ENCODE measurements at regions of chr10 and their contacts with region 1.

Region 1: GRCh38 chr10:13219685-13220670 is 14.2 kb downstream of the UCMA start:
- DNase-seq: peak; percentile 57
- H3K4me3 ChIP-seq: peak overlapping the region in 1 of 3 experiments; percentile 20
- H3K27ac ChIP-seq: no peak overlapping the region
- H3K4me1 ChIP-seq: peaks cover 8% of the 10 kb centered on the region
- H3K27me3 ChIP-seq: no peaks in the 10 kb centered on the region
- CTCF ChIP-seq: peak; percentile 41 to 53

Region 2: GRCh38 chr10:13276749-13277365 is 56.9 kb after region 1 on chr10:
- CTCF ChIA-PET with region 1: no interaction called
- dilution Hi-C with region 1: loop called (anchors 5 kb)
- in situ Hi-C with region 1: no loop called
- intact Hi-C with region 1: no loop called
- DNase-seq: no peak
- H3K4me3 ChIP-seq: no peak overlapping the region
- H3K27ac ChIP-seq: no peak overlapping the region
- H3K4me1 ChIP-seq: no peaks in the 10 kb centered on the region
- H3K27me3 ChIP-seq: no peaks in the 10 kb centered on the region
- CTCF ChIP-seq: peak in 1 of 2 donors; percentile 8

Region 3: GRCh38 chr10:13311177-13311575 is 91.2 kb after region 1 on chr10:
- CTCF ChIA-PET with region 1: no interaction called
- dilution Hi-C with region 1: loop called (anchors 5 kb)
- in situ Hi-C with region 1: no loop called
- intact Hi-C with region 1: no loop called
- DNase-seq: no peak
- H3K4me3 ChIP-seq: no peak overlapping the region
- H3K27ac ChIP-seq: no peak overlapping the region
- H3K4me1 ChIP-seq: no peaks in the 10 kb centered on the region
- H3K27me3 ChIP-seq: no peaks in the 10 kb centered on the region
- CTCF ChIP-seq: no peak

Region 4: DNA sequence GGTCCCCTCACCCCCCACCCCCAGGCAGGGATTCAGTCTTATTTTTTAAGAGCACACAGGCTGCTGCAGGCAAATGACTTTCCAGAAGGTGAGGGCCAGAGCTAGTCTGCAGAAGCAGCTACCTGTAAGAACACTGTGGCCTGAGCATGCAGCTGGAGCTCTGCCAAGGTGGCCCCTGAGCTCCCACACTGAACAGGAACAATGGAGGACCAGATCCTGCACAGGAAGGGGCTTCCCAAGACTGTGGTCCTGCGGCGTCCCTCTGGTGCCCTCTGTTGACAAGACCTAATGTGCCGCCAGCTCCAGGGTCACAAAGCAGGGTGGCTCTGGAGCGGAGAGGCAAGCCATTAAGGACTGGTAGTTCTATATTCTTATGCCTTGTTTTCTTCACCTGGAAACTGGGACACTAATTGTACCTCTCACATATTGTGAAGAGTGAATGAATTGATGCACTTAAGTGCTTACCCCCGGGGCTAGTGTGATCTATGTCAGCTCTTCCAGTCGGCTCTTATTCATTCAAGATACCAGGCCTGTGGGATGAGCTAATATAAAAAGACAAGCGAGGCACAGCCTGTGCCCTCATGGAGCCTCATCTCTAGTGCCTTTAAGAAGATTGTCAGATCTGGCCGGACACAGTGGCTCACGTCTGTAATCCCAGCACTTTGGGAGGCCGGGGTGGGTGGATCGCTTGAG is 316.8 kb after region 1 on chr10:
- CTCF ChIA-PET with region 1: no interaction called
- dilution Hi-C with region 1: no loop called
- in situ Hi-C with region 1: no loop called
- intact Hi-C with region 1: loop called (anchors 5 kb)
- DNase-seq: peak; percentile 14
- H3K4me3 ChIP-seq: no peak overlapping the region
- H3K27ac ChIP-seq: no peak overlapping the region
- H3K4me1 ChIP-seq: no peaks in the 10 kb centered on the region
- H3K27me3 ChIP-seq: no peaks in the 10 kb centered on the region
- CTCF ChIP-seq: peak; percentile 44 to 70